Transverse colon (tissue), 4 donors: ENCODE measurements at regions of chr11 and their contacts with region 1.

Region 1: GRCh38 chr11:25317216-25317615 is 820.4 kb downstream of the LUZP2 start:
- DNase-seq: no peak
- H3K4me3 ChIP-seq: no peak overlapping the region
- H3K27ac ChIP-seq: no peak overlapping the region
- H3K4me1 ChIP-seq: no peaks in the 10 kb centered on the region
- H3K27me3 ChIP-seq: no peaks in the 10 kb centered on the region
- CTCF ChIP-seq: no peak
- EP300 ChIP-seq: no peak
- POLR2A ChIP-seq: no peak

Region 2: GRCh38 chr11:25252854-25253253 is 64.4 kb before region 1 on chr11:
- in situ Hi-C with region 1: loop called in 1 of 4 experiments (anchors 10 kb)
- intact Hi-C with region 1: no loop called
- DNase-seq: no peak
- H3K4me3 ChIP-seq: no peak overlapping the region
- H3K27ac ChIP-seq: no peak overlapping the region
- H3K4me1 ChIP-seq: no peaks in the 10 kb centered on the region
- H3K27me3 ChIP-seq: no peaks in the 10 kb centered on the region
- CTCF ChIP-seq: no peak
- EP300 ChIP-seq: no peak
- POLR2A ChIP-seq: no peak

Region 3: GRCh38 chr11:25419271-25419670 is 102.1 kb after region 1 on chr11:
- in situ Hi-C with region 1: no loop called
- intact Hi-C with region 1: no loop called
- DNase-seq: no peak
- H3K4me3 ChIP-seq: no peak overlapping the region
- H3K27ac ChIP-seq: no peak overlapping the region
- H3K4me1 ChIP-seq: no peaks in the 10 kb centered on the region
- H3K27me3 ChIP-seq: no peaks in the 10 kb centered on the region
- CTCF ChIP-seq: no peak
- EP300 ChIP-seq: no peak
- POLR2A ChIP-seq: no peak